Ascending aorta (tissue), 2 donors: ENCODE measurements at regions of chr14 and their contacts with region 1.

Region 1: DNA sequence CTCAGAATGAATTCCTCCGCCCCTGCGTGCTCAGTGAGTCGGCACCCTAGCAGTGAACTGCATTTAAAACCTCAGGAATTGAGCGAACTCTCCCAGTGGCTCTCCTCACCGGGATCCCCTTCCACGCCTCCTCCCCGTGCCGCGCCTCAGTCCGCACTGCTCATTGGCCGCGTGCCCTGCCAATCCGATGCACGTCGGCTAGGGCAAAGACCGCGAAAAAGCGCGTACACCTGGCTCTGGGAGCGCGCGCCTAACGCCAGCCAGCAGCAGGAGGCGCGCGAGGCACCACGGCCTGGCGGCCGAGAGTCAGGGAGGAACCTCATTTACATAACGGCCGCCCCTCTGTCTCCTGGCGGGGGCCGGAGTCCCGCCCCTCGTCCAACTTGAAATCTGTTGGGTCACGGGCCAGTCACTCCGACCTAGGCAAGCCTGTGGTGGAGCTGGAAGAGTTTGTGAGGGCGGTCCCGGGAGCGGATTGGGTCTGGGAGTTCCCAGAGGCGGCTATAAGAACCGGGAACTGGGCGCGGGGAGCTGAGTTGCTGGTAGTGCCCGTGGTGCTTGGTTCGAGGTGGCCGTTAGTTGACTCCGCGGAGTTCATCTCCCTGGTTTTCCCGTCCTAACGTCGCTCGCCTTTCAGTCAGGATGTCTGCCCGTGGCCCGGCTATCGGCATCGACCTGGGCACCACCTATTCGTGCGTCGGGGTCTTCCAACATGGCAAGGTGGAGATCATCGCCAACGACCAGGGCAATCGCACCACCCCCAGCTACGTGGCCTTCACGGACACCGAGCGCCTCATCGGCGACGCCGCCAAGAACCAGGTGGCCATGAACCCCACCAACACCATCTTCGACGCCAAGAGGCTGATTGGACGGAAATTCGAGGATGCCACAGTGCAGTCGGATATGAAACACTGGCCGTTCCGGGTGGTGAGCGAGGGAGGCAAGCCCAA is at the start of gene HSPA2:
- DNase-seq: peak; percentile 99 to 100
- H3K4me3 ChIP-seq: peak within 1 kb of the TSS; percentile 69 to 74
- H3K27ac ChIP-seq: peak within 1 kb of the TSS; percentile 87 to 93
- H3K4me1 ChIP-seq: peaks cover 0 to 10% of the 10 kb centered on the region in 2 donors
- H3K27me3 ChIP-seq: no peaks in the 10 kb centered on the region
- CTCF ChIP-seq: peak; percentile 80 to 87 (median 86)
- total RNA-seq, gene HSPA2: 22.9 TPM

Region 2: DNA sequence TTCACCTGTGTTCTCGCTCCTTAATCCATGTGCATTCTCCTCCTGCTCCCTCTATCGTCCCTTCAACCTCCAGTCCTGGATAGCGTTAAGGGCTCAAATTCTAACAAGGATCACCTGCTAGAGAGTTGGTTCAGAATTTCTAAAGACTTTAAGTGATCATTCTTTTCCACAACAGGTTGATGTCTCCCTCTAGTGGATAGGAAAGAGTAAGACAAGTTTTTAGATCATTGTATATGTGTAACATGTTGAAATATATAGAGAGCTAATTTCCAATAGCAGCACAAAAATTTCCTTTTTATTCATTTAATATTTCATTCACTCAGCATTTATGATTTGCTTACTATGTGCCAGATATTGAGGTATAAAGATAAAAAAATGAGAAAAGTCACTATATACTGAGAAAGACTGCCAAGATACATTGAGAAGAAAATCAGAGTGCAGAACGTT is 237.0 kb before region 1 on chr14:
- intact Hi-C with region 1: no loop called
- DNase-seq: no peak
- H3K4me3 ChIP-seq: no peak overlapping the region
- H3K27ac ChIP-seq: no peak overlapping the region
- H3K4me1 ChIP-seq: no peaks in the 10 kb centered on the region
- H3K27me3 ChIP-seq: no peaks in the 10 kb centered on the region
- CTCF ChIP-seq: peak; percentile 45 to 85 (median 77)

Region 3: DNA sequence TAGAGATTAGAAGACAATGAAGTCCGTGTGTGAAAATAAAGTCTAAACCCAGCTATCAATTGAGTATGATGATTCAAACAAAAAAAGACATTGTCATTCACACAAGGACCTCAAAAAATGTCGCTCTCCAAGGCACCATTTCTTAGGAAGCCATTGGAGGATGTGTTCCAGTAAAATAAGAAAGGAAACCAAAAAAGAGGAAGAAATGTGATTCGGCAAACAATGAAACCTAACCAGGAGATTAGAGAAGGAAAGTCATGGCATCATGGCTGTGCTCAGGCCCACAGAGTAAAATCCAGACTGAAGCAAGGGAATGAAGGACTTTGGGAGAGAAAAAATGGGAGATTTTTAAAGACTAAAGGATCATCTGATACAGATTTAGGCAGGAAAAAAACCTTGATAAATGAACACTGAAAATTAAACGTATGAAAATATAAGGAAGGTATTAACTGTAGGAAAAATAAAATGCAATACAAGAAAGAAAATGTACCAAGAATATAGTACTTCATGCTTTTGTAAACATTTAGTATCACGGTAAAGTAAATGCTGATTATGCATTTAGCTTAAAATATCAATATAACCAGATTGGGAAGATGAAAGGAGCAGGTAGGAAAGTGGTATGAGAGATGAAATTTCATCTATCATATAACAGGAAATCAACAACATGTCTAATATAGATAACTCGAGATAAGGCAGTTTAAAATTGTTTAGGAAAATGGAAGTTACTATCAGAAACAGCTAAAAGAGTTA is 190.6 kb before region 1 on chr14:
- intact Hi-C with region 1: no loop called
- DNase-seq: no peak
- H3K4me3 ChIP-seq: no peak overlapping the region
- H3K27ac ChIP-seq: no peak overlapping the region
- H3K4me1 ChIP-seq: no peaks in the 10 kb centered on the region
- H3K27me3 ChIP-seq: no peaks in the 10 kb centered on the region
- CTCF ChIP-seq: no peak

Region 4: GRCh38 chr14:64503478-64504309 is 36.8 kb before region 1 on chr14 and contains the start of gene ZBTB25:
- intact Hi-C with region 1: loop called (anchors 1 kb)
- DNase-seq: peak; percentile 86 to 96
- H3K4me3 ChIP-seq: peak within 1 kb of the TSS; percentile 91 to 94
- H3K27ac ChIP-seq: peak within 1 kb of the TSS; percentile 99
- H3K4me1 ChIP-seq: peaks cover 13 to 44% of the 10 kb centered on the region in 2 donors
- H3K27me3 ChIP-seq: no peaks in the 10 kb centered on the region
- CTCF ChIP-seq: no peak
- total RNA-seq, gene ZBTB25: 2.9 TPM

Region 5: DNA sequence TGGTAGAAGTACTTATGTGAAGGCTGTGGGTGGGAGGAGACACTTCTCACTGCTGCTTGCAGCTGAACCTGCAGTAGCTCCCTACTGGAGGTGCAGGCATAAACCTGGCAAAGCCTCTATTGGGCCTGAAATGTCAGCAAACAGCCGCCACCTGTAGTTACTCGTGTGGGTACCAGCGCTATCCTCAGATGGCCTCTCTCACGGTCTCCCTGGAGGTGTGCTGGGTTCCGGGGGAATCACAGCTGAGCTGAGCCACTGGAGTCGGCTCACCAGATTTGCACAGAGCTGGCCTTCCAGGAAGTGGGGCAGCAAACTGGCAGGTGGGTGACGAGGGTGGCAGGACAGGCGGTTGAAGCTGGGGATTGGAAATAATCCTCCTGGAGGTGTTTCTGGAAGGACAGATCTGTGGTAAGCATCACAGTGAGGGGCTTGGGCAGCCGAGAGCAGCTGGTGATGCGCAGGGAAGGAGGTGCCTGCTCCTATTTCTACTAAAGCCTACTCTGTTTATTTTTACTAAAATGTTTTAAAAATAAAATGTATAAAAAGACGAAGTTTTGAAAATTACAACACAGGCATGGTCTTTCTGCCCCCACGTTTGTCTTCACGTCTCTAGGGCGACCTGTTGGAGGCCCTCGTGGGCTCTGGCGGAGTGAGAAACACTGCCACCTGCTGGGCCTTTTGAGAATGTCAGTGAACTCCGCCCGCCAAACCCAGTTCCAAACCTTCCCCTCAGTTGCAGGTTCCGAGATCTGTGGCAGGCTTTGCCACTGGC is 95.9 kb after region 1 on chr14:
- intact Hi-C with region 1: loop called (anchors 1 kb)
- DNase-seq: peak in 1 of 2 donors; percentile 83
- H3K4me3 ChIP-seq: no peak overlapping the region
- H3K27ac ChIP-seq: no peak overlapping the region
- H3K4me1 ChIP-seq: no peaks in the 10 kb centered on the region
- H3K27me3 ChIP-seq: no peaks in the 10 kb centered on the region
- CTCF ChIP-seq: peak; percentile 78 to 93 (median 92)

Region 6: GRCh38 chr14:64745511-64746091 is 205.1 kb after region 1 on chr14:
- intact Hi-C with region 1: loop called (anchors 5 kb)
- DNase-seq: no peak
- H3K4me3 ChIP-seq: no peak overlapping the region
- H3K27ac ChIP-seq: peak overlapping the region; percentile 78 to 84
- H3K4me1 ChIP-seq: peaks cover 6 to 25% of the 10 kb centered on the region in 2 donors
- H3K27me3 ChIP-seq: no peaks in the 10 kb centered on the region
- CTCF ChIP-seq: peak in 1 of 3 experiments; percentile 26

Region 7: GRCh38 chr14:64914237-64914971 is 373.9 kb after region 1 on chr14 and contains the start of gene CHURC1:
- intact Hi-C with region 1: loop called (anchors 10 kb)
- DNase-seq: peak; percentile 98 to 100
- H3K4me3 ChIP-seq: peak within 1 kb of the TSS; percentile 90 to 99
- H3K27ac ChIP-seq: peak within 1 kb of the TSS; percentile 94 to 98
- H3K4me1 ChIP-seq: peaks cover 3 to 30% of the 10 kb centered on the region in 2 donors
- H3K27me3 ChIP-seq: no peaks in the 10 kb centered on the region
- CTCF ChIP-seq: no peak
- total RNA-seq, gene CHURC1: 31.9 TPM